ENCODE measurements at regions of chr18 and their contacts with region 1.

Region 1: DNA sequence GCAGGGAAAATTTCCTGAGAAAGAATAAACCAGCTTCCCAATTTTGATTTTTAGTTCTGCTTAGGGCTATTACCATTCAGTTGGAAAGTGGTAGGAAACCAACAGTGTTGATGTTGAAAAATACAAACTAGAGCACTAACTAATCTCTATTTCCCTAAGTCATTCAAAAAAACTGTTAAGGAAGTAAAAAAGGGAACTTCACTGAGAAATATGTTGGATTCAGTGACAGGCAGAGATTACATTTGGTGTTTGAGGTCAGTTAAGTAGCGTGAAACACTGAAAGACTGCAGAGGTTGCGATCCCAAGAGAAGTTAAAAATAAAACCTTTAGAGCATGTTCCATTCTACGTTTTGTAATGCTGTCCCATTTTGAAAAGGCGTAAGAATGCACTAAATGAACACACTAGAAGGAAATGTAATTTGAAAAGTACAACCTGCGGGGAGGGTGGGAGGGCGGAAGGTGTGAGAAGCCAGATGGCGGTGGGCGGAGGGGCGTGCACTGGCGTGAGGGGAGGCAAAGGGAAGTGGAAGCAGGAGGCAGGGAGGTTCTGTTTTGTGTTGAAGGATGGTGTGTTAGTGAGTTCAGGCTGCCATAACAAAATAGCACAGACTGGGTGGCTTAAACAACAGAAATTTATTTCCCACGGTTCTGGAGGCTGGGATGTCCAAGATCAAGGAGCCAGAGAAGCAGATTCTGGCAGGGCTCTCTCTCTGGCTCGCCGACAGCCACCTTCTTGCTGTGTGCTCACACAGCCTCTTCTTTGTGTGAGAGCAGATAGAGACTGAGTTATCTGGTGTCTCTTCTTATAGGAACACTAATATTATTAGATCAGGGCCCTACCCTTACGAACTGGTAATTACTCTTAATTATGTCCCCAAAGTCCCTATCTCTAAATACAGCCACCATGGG is 94.3 kb upstream of the KCTD1 start:
- DNase-seq: no peak
- H3K4me3 ChIP-seq: no peak overlapping the region
- H3K27ac ChIP-seq: no peak overlapping the region
- H3K4me1 ChIP-seq: no peaks in the 10 kb centered on the region
- H3K27me3 ChIP-seq: no peaks in the 10 kb centered on the region
- CTCF ChIP-seq: no peak

Region 2: GRCh38 chr18:26190506-26190905 is 452.2 kb before region 1 on chr18:
- intact Hi-C with region 1: no loop called
- DNase-seq: no peak
- H3K4me3 ChIP-seq: no peak overlapping the region
- H3K27ac ChIP-seq: no peak overlapping the region
- H3K4me1 ChIP-seq: no peaks in the 10 kb centered on the region
- H3K27me3 ChIP-seq: no peaks in the 10 kb centered on the region
- CTCF ChIP-seq: no peak

Region 3: GRCh38 chr18:26480897-26481895 is 161.5 kb before region 1 on chr18:
- intact Hi-C with region 1: no loop called
- DNase-seq: no peak
- H3K4me3 ChIP-seq: no peak overlapping the region
- H3K27ac ChIP-seq: no peak overlapping the region
- H3K4me1 ChIP-seq: peaks cover 0 to 3% of the 10 kb centered on the region in 2 donors
- H3K27me3 ChIP-seq: no peaks in the 10 kb centered on the region
- CTCF ChIP-seq: no peak

Region 4: GRCh38 chr18:26526128-26526965 is 116.3 kb before region 1 on chr18:
- intact Hi-C with region 1: loop called (anchors 5 kb)
- DNase-seq: no peak
- H3K4me3 ChIP-seq: no peak overlapping the region
- H3K27ac ChIP-seq: no peak overlapping the region
- H3K4me1 ChIP-seq: no peaks in the 10 kb centered on the region
- H3K27me3 ChIP-seq: no peaks in the 10 kb centered on the region
- CTCF ChIP-seq: no peak

Measured in ascending aorta (tissue), 2 donors.